Activated CD4-positive, alpha-beta memory T cell treated with anti-CD3 and anti-CD28 coated beads for 36 hours (primary cell): ENCODE measurements at regions of chr14 and their contacts with region 1.

Region 1: DNA sequence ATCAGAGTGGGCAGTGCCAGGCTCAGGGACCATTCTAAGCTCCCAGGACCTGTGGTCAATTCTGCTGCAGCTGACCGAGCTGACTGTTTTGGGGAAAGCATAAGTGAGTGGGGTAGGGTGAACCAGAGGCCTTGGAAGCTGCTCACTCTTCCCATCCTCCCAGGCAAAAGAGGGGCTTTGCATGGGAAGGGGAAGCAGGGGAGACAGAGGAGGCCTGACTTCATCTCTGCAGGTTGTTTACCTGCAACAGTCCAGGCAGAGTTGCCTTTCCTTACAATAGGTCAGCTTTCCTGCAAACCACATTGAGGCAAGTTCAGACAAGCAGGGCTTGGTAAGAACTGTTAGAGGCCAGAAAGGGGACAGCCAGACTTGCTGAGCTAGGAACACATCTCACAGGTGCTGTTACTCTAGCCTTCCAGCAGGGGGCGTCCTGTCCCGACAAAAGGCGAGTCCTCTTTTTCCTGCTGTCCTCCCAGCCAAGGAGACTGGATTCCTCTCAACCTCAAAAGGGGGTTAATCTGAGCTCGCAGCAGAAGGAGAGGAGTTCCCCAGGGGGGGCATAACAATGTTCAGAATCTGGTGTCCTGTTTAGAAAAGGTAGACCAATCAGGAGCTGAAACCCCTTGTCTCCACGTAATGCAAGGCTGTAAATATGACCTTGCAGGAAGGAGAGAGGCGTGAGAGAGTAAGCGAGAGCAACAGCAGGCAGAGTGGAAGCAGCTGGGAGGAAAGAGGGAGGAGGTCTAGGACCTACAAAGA is 4.3 kb upstream of the DHRS2 start:
- DNase-seq: peak; percentile 79
- H3K4me3 Mint-ChIP-seq: peak overlapping the region; percentile 24
- H3K27ac Mint-ChIP-seq: no peak overlapping the region
- H3K4me1 Mint-ChIP-seq: peaks cover 3% of the 10 kb centered on the region
- H3K27me3 Mint-ChIP-seq: peaks cover 2% of the 10 kb centered on the region

Region 2: GRCh38 chr14:23430788-23431085 is 201.1 kb before region 1 on chr14:
- CTCF ChIA-PET with region 1: no interaction called
- POLR2A ChIA-PET with region 1: no interaction called
- intact Hi-C with region 1: no loop called
- DNase-seq: no peak
- H3K4me3 Mint-ChIP-seq: no peak overlapping the region
- H3K27ac Mint-ChIP-seq: no peak overlapping the region
- H3K4me1 Mint-ChIP-seq: no peaks in the 10 kb centered on the region
- H3K27me3 Mint-ChIP-seq: no peaks in the 10 kb centered on the region

Region 3: DNA sequence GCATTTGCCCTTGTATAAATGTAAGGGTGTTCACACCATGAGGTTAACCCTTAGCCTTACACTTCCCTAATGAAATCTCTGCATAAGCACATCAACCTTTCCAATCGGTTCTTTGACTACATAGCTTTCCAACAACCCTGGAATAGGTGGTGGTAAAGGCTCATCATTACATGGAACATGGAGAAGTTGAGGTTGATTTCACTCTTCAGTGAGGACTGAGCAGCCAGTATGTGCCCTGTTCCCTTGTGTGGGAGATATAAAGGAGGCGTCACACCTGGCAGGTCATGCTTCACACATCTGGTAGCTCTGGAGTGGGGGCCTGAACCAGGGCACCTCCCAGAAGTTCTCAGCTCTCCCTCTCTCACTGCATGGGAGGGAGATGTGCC is 31.6 kb before region 1 on chr14:
- CTCF ChIA-PET with region 1: interaction called, 14 read pairs
- POLR2A ChIA-PET with region 1: no interaction called
- intact Hi-C with region 1: no loop called
- DNase-seq: no peak
- H3K4me3 Mint-ChIP-seq: no peak overlapping the region
- H3K27ac Mint-ChIP-seq: no peak overlapping the region
- H3K4me1 Mint-ChIP-seq: no peaks in the 10 kb centered on the region
- H3K27me3 Mint-ChIP-seq: no peaks in the 10 kb centered on the region

Region 4: GRCh38 chr14:23621204-23621931 is 10.5 kb before region 1 on chr14:
- CTCF ChIA-PET with region 1: interaction called, 42 read pairs
- POLR2A ChIA-PET with region 1: no interaction called
- intact Hi-C with region 1: no loop called
- DNase-seq: no peak
- H3K4me3 Mint-ChIP-seq: no peak overlapping the region
- H3K27ac Mint-ChIP-seq: no peak overlapping the region
- H3K4me1 Mint-ChIP-seq: no peaks in the 10 kb centered on the region
- H3K27me3 Mint-ChIP-seq: peaks cover 7% of the 10 kb centered on the region

Region 5: DNA sequence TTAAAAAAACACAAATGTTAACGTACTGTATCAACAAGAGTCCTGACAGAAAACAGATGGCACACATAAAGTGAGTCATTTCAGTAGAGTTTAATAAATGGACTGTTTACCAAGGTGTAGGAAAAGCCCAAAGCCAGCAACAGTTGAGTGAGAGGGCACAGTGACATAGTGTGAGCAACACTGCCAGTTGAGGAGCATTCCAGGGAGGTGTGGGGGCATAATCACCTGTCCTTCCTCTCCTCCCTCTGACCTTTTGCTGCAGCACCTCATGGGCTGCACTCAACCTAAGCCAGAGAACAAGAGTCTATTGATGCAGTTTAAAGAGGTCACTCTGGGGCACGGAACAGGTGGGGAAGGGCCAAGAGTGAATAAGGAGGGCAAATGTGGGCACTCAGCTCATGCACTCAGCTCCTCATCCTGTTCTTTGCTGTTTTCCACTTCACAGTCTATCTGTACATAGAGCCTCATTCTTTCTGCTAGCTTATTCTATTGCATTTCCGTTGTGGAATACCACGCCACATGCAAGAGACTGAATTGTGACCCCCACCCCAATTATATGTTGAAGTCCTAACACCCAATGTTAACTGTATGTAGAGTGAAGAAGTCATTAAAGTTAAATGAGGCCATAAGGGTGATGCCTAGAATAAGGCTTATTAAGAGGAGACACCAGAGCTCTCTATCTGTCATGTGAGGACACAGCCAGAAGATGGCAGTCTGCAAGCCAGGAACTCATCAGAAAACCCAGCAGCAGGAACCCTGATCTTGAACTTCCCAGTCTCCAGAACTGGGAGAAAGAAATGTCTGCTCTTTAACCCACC is 33.7 kb after region 1 on chr14:
- CTCF ChIA-PET with region 1: interaction called, 14 read pairs
- POLR2A ChIA-PET with region 1: no interaction called
- intact Hi-C with region 1: no loop called
- DNase-seq: peak; percentile 23
- H3K4me3 Mint-ChIP-seq: no peak overlapping the region
- H3K27ac Mint-ChIP-seq: no peak overlapping the region
- H3K4me1 Mint-ChIP-seq: no peaks in the 10 kb centered on the region
- H3K27me3 Mint-ChIP-seq: no peaks in the 10 kb centered on the region

Region 6: DNA sequence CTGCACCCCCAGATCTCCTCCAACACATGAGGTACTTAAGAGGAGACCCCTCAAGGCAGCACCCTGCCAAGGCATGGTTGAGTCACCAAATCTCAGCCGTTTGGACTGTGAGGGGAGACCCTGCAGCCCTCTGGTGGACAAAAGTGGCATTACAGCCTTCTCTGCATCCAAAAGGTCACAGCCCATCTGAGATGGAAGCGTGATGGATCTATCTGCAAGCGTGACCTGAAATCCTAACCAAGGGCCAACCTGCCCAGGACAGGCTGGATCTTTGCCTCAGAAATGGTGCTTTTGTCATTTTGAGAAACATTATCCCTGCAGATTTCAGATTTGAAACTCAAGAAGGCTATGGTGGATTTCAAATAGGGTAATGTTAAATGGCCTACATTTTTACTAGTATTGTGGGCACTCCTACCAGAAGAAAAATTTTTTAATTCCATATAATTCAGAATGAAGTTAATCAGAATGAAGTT is 298.0 kb after region 1 on chr14:
- CTCF ChIA-PET with region 1: interaction called, 35 read pairs
- POLR2A ChIA-PET with region 1: no interaction called
- intact Hi-C with region 1: loop called (anchors 1 kb)
- DNase-seq: peak; percentile 88
- H3K4me3 Mint-ChIP-seq: no peak overlapping the region
- H3K27ac Mint-ChIP-seq: no peak overlapping the region
- H3K4me1 Mint-ChIP-seq: no peaks in the 10 kb centered on the region
- H3K27me3 Mint-ChIP-seq: peaks cover 3% of the 10 kb centered on the region